ENCODE measurements at regions of chr2 and their contacts with region 1.

Region 1: GRCh38 chr2:84905181-84906107 is at the start of gene TMSB10:
- DNase-seq: peak; percentile 84 to 91 (median 88)
- ATAC-seq: peak; percentile 88
- H3K4me3 ChIP-seq: peak within 1 kb of the TSS; percentile 96
- H3K27ac ChIP-seq: peak within 1 kb of the TSS; percentile 91
- H3K4me1 ChIP-seq: peaks cover 19 to 23% of the 10 kb centered on the region in 2 experiments
- H3K27me3 ChIP-seq: no peaks in the 10 kb centered on the region
- CTCF ChIP-seq: 0 out of 6 replicates have a peak, but pooled peaks of 1 of the 3 experiments have one; percentile 9
- EP300 ChIP-seq: peak; percentile 44
- POLR2A ChIP-seq: peak; percentile 92
- RAD21 ChIP-seq: no peak
- polyA plus RNA-seq, gene TMSB10: 382 to 669 TPM

Region 2: GRCh38 chr2:84888401-84889276 is 16.8 kb before region 1 on chr2:
- CTCF ChIA-PET with region 1: no interaction called
- POLR2A ChIA-PET with region 1: interaction called, 10 read pairs
- in situ Hi-C with region 1: no loop called
- intact Hi-C with region 1: no loop called
- DNase-seq: no peak
- ATAC-seq: peak; percentile 69
- H3K4me3 ChIP-seq: no peak overlapping the region
- H3K27ac ChIP-seq: peak overlapping the region; percentile 17; the same call in 2 of the 3 replicates
- H3K4me1 ChIP-seq: peaks cover 6 to 18% of the 10 kb centered on the region in 2 experiments; a peak in 3 of 5 replicates
- H3K27me3 ChIP-seq: peaks cover 2 to 6% of the 10 kb centered on the region in 2 experiments; a peak in 3 of 5 replicates
- CTCF ChIP-seq: no peak
- EP300 ChIP-seq: no peak
- POLR2A ChIP-seq: no peak
- RAD21 ChIP-seq: no peak

Region 3: DNA sequence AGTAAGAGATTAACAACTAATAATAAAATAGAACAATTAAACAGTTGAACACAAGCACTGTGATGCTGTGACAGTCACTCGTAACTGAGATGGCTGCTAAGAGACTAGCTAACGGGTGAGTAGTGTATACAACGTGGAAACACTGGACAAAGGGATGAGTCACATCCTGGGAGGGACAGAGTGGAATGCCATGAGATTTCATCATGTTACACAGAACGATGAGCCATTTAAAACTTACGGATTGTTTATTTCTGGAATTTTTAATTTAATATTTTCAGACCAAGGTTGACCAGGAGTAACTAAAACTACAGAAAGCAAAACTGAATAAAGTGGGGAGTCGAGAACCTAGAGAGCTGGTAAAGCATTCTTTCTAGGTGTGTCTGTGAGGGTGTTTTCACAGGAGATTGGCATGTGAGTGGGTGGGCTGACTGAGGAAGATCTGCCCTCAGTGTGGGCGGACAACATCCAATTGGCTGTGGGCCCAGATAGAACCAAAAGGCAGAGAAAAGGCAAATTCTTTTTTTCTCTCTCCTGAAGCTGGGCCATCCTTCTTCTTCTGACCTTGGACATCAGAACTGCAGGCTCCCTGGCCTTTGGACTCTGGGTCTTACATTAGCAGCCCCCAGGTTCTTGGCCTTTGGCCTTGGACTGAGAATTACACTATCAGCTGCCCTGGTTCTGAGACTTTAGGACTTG is 14.6 kb after region 1 on chr2:
- CTCF ChIA-PET with region 1: interaction called, 7 read pairs
- POLR2A ChIA-PET with region 1: interaction called, 78 read pairs
- in situ Hi-C with region 1: no loop called
- intact Hi-C with region 1: loop called (anchors 2 kb)
- DNase-seq: peak; percentile 28 to 81 (median 49)
- ATAC-seq: peak; percentile 91
- H3K4me3 ChIP-seq: no peak overlapping the region
- H3K27ac ChIP-seq: peak overlapping the region; percentile 84
- H3K4me1 ChIP-seq: peaks cover 0 to 23% of the 10 kb centered on the region in 2 experiments; a peak in 4 of 5 replicates
- H3K27me3 ChIP-seq: no peaks in the 10 kb centered on the region
- CTCF ChIP-seq: no peak
- EP300 ChIP-seq: peak; percentile 87
- POLR2A ChIP-seq: peak; percentile 27; the same call in 1 of the 2 replicates
- RAD21 ChIP-seq: no peak